Left cardiac atrium (tissue), 4 donors: ENCODE measurements at regions of chr7 and their contacts with region 1.

Region 1: GRCh38 chr7:22269963-22270362 is 87.0 kb downstream of the RAPGEF5 start:
- DNase-seq: no peak
- ATAC-seq: no peak

Region 2: GRCh38 chr7:22137466-22137865 is 132.5 kb before region 1 on chr7:
- intact Hi-C with region 1: loop called in 1 of 2 experiments (anchors 10 kb)
- DNase-seq: no peak
- ATAC-seq: no peak

Region 3: DNA sequence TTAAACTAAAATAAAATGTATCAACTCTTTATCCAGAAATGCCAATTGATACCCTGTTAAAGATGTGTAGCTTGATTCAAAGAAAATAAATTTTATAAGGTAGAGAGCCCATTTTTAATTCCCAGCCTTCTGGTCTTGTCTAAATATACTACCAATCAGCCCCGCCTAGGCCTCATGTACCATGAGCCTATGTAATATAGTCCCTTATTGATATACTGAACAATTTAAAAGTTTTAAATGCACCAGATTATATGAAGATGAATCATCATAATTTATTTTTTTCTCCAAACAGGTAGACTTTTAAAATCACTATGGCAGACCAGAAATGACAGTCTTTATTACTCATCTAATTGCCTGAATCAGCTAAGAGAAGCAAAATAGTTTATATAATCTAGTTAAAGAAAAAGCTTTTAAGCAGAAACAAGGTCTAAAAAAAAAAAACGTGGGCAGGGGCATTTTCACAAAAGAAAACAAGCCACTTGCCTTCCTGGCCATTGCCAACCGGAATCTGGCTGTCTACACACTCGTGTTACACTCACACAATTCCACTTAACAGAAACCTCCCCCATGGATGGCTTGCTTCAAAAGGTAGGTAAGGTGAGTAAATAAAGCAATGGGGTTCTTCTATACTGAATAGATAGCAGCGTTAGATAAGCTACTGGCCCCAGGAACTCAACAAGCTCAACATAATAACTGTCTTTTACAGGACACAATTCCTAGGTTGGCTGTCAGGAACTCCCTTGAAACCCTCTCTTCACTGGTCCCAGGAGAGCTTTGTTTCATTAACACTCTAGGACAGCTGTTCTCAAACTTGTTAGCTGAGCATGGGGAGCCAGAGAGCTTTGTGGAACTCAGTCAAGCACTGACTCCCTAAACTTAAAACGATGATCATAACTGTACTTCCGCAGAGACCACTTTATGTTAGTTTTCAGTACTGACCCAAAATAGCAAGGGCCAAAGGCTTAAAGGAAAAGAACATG is 49.8 kb after region 1 on chr7:
- intact Hi-C with region 1: no loop called
- DNase-seq: no peak
- ATAC-seq: no peak